GM10248 (cell line): ENCODE measurements at regions of chr15 and their contacts with region 1.

Region 1: GRCh38 chr15:92903941-92904831 is 4.1 kb downstream of the CHD2 start:
- DNase-seq: peak; percentile 90
- CTCF ChIP-seq: no peak

Region 2: DNA sequence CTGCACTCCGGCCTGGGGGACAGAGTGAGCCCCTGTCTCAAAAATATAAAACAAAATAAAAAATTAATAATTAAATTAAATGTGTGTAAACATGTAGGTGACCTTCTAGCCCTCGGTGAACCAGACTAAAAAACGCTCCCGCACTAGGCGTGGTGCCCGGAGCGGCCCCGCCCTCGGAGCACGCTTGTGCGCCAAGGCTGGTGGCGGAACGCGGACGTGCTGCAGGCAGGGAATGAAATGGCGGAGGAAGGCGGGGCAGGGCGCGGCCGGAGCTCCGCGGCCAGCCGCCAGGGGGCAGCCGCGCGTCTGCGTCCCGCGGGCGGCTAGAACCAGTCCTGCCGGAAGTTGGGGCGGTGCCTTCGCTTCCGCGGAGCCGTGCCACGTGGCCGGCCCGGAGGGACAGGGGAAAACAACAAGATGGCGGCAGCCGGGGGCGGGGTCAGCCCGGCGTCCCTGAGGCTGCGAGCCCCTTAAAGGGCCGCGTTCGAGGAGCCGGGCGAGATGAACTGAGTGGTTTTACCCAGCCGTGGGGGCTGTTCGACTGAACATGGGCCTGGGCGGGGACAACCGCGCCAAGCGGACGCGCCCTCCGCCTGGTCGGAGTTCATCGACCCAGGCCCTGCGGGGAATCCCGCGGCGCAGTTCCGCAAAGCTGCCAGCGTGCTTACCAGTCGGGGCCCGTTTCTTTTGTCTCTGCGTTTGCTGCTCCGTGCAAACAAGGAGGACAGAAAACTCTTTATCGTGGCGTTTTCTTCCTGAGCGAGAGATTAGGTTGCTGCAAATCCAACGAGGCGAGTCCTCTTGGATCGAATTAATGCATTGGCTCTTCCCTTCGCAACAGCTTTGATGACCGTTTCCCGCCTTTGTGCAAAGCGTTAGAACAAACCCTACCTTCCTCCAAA is 95.0 kb before region 1 on chr15:
- CTCF ChIA-PET with region 1: interaction called, 42 read pairs
- POLR2A ChIA-PET with region 1: interaction called, 22 read pairs
- DNase-seq: peak; percentile 97
- CTCF ChIP-seq: peak; percentile 84

Region 3: GRCh38 chr15:92831655-92832328 is 72.4 kb before region 1 on chr15:
- CTCF ChIA-PET with region 1: interaction called, 3 read pairs
- POLR2A ChIA-PET with region 1: interaction called, 13 read pairs
- DNase-seq: peak; percentile 88
- CTCF ChIP-seq: no peak

Region 4: DNA sequence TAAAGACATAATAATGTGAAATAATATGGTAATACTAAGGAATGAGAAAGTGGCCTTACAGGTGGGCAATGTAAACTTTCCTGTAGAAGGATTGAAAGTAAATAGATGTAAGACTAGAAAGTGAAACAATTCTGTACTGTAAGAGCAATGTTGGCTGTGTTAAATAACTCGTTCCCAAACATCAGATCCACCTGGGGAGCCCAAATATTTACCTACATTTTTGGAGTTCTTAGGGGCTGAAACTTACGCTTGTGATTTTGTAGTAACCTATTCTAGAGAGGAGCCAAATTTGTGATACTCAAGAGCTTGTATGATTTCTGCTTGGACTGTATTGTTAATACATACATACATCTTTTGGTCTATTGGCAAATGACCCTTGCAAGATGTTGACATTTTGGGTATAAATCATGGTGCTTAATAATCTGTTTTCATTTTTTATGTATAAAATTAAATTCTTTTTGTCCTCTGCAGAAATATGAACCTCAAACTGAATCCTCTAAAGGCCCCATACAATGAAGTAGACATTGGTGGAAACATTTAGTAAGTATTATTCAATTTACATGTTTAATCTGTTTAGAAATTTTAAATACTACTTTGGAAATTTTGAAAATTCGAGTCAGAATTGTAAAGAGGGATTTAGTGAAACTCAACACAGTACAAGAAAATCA is 12.5 kb before region 1 on chr15:
- CTCF ChIA-PET with region 1: interaction called, 6 read pairs
- POLR2A ChIA-PET with region 1: interaction called, 12 read pairs
- DNase-seq: no peak
- CTCF ChIP-seq: no peak

Region 5: DNA sequence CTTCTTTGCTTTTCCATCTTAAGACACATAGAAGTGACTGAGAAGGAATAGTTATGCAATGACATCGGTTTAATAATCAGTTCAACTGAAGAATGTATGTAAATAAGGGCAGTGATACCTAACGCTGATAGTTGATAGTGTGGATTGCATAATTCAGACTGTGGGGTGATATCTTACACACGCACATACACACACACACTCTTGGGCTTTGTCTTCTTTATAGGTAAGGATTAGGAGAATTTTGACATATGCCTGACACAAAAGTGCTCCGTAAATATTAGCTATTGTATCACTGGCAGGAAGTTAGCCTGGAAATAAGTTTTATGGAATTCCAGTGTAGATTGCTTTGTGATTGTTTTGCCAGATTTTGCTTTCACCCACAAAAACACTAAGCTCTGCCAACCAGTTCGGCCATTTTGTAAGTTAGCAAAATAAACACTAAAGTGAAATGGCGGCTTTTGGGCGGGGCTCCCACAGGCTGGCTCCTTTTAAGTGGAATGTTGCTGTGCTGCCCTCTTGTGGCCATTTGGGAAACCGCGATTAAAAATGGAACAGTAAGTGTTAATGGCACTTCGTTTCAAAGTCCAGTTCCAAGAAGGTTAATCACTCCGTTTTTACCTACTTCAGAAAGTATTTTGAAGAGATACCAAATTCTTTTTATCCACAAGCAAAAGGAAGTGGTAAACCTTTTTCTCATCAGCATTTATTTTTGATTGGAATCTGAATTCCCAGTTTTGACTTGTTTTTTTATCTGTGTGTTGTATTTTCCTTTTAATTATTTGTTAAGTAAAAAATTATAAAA is 13.6 kb after region 1 on chr15:
- CTCF ChIA-PET with region 1: interaction called, 27 read pairs
- POLR2A ChIA-PET with region 1: interaction called, 9 read pairs
- DNase-seq: peak; percentile 79
- CTCF ChIP-seq: peak; percentile 82

Region 6: GRCh38 chr15:93048759-93049161 is 144.6 kb after region 1 on chr15:
- CTCF ChIA-PET with region 1: no interaction called
- POLR2A ChIA-PET with region 1: no interaction called
- DNase-seq: no peak
- CTCF ChIP-seq: no peak